ENCODE measurements at regions of chr5 and their contacts with region 1.

Region 1: GRCh38 chr5:90368454-90369246 is 40.9 kb downstream of the CETN3 start:
- DNase-seq: no peak
- H3K4me3 ChIP-seq: no peak overlapping the region
- H3K27ac ChIP-seq: no peak overlapping the region
- H3K4me1 ChIP-seq: no peaks in the 10 kb centered on the region
- H3K27me3 ChIP-seq: no peaks in the 10 kb centered on the region
- CTCF ChIP-seq: no peak

Region 2: DNA sequence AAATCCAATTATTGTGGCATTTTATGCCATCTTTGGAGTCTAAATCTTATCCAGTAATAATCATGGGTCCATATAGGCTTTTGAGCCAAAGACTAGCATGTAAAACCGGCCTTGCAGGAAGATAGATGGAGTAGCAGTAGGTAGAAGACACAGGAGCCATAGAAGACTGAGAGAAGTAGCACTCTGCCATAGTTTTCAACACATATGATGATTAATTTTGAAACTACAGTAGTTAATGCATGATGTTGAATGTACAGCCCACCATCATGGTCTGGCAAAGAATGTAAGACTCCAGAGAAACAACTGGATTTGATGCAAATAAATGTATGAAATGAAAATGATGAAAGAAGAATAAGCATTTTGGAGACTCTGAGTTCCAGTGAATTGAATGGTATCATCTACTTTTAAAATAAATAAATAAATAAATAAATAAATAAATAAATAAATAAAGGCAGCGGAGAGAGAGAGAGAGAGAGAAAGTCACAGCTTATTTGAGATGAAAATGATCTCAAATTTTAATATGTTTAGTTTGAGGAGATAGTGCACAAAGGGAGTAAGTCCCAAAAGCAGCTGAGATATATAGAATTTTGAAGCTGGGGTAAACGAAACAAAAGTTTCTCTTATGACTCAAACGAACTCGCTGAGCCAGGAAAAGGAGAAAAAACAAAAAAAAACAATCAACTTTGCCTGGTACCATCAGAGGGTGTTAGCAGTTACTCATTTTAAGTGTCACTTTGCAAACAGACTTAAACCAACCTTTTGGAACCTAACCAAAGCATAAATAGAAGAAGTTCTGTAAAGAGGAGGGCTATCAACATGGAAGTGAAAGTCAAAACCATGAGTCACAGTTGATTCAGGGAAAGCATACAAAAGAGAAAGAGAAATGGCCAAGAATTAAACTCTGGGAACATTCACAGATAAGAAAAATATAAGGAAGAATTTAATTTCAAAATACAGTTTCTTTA is 347.8 kb before region 1 on chr5:
- CTCF ChIA-PET with region 1: no interaction called
- dilution Hi-C with region 1: no loop called
- in situ Hi-C with region 1: no loop called
- intact Hi-C with region 1: no loop called
- DNase-seq: peak; percentile 76
- H3K4me3 ChIP-seq: no peak overlapping the region
- H3K27ac ChIP-seq: no peak overlapping the region
- H3K4me1 ChIP-seq: no peaks in the 10 kb centered on the region
- H3K27me3 ChIP-seq: no peaks in the 10 kb centered on the region
- CTCF ChIP-seq: no peak

Region 3: DNA sequence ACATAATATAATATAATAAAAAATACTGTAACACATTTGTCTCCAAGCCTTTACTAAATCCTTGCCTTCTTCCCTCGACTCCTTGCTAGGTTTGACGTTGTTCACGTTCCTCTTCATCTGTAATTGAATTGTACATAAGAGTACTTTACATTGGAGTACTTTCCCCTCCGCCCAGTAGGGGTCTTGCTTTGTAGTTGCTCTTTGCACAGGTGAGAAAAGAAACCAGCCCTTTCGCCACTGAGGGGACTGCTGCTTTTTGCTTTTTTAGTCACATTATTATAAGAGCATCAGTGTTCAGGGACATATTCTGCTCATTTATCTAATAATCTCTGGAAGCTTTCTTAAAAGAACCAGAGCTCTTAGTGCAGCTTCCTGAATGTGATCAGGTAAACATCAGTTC is 74.0 kb before region 1 on chr5:
- CTCF ChIA-PET with region 1: no interaction called
- dilution Hi-C with region 1: loop called (anchors 5 kb)
- in situ Hi-C with region 1: no loop called
- intact Hi-C with region 1: no loop called
- DNase-seq: no peak
- H3K4me3 ChIP-seq: no peak overlapping the region
- H3K27ac ChIP-seq: no peak overlapping the region
- H3K4me1 ChIP-seq: no peaks in the 10 kb centered on the region
- H3K27me3 ChIP-seq: no peaks in the 10 kb centered on the region
- CTCF ChIP-seq: no peak

Region 4: DNA sequence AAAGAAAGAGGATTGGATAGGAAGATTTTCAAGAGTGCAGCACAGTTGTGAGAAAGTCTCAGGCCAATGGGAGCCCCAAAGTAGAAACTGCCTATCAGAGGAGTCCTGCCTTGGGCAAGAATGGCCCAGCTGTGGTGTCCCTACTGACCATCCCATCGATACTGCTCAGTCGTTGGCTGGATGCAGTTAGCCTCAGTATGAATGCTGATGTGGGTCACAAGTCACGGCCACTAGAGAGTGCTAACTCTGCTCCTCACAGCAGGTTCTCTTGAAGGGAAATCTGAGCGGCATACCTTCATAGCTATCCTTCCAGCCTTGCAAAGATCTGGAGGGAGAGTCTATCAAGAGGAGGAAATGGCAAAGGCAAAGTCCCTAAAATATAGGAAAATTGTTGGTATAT is 52.5 kb after region 1 on chr5:
- CTCF ChIA-PET with region 1: no interaction called
- dilution Hi-C with region 1: no loop called
- in situ Hi-C with region 1: no loop called
- intact Hi-C with region 1: no loop called
- DNase-seq: no peak
- H3K4me3 ChIP-seq: no peak overlapping the region
- H3K27ac ChIP-seq: no peak overlapping the region
- H3K4me1 ChIP-seq: no peaks in the 10 kb centered on the region
- H3K27me3 ChIP-seq: peaks cover 1% of the 10 kb centered on the region
- CTCF ChIP-seq: peak; percentile 10 to 41

Measured in mammary epithelial cell (primary cell).